ENCODE measurements at regions of chr1 and their contacts with region 1.

Region 1: DNA sequence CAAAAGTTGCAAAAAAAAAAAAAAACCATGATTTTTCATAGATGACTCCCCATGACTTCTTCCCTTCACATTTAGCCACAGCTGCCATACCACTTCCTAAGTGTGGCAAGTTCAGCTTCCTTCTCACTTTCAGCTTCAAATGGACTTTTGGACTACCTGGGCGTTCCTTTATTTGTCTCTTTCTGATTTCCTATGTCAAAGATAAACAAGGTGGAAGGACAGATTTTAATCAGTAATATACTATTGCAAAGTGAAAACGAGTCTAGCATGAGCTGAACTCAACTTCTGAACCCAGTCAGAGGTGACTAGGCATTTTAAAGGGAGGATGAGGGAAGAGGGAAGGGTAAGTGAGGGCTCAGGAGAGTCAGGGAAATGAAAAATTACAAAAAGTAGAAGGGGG is 14.4 kb upstream of the SCCPDH start:
- DNase-seq: no peak
- H3K4me3 ChIP-seq: no peak overlapping the region
- H3K4me3 Mint-ChIP-seq: no peak overlapping the region
- H3K27ac Mint-ChIP-seq: peak overlapping the region; percentile 47
- H3K4me1 ChIP-seq: peaks cover 11% of the 10 kb centered on the region
- H3K4me1 Mint-ChIP-seq: peaks cover 9% of the 10 kb centered on the region
- H3K27me3 ChIP-seq: no peaks in the 10 kb centered on the region
- H3K27me3 Mint-ChIP-seq: no peaks in the 10 kb centered on the region
- CTCF ChIP-seq: no peak

Region 2: DNA sequence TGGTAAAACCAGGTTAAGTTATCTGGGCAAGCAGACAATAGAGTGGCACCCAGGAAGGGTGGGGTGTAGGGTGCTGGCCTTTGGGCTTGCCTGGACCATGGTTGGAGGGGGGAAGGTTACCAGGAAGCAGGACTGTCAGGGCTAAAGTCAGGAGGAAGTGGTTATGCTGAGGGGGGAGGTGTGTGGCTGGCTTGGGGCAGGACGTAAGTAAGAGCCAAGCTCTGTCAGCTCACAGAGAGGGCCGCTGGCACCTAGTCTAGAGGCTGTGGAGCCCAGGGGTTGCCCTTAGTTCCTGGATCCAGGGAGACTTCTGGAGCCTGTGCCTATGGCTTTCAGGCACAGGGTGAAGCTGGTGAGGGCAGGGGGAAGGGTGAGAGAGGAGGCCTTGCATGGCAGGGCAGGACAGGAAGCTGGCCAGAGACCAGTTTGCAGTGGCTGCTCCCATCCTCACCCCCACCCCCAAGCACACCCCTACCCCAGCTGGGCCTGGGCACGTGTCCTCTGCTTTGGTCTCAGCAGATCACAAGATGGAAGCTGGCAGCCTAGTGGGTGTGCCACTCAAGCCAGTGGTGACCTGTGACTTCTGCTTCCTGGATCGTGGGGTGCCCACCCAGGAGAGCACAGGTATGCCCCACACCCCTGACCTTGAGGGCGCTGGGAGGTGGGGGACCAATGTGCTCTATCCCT is 182.3 kb before region 1 on chr1:
- CTCF ChIA-PET with region 1: no interaction called
- POLR2A ChIA-PET with region 1: no interaction called
- intact Hi-C with region 1: no loop called
- DNase-seq: no peak
- H3K4me3 ChIP-seq: no peak overlapping the region
- H3K4me3 Mint-ChIP-seq: no peak overlapping the region
- H3K27ac Mint-ChIP-seq: no peak overlapping the region
- H3K4me1 ChIP-seq: no peaks in the 10 kb centered on the region
- H3K4me1 Mint-ChIP-seq: no peaks in the 10 kb centered on the region
- H3K27me3 ChIP-seq: no peaks in the 10 kb centered on the region; the same call in 1 of the 2 replicates
- H3K27me3 Mint-ChIP-seq: peaks cover 3% of the 10 kb centered on the region
- CTCF ChIP-seq: no peak

Region 3: GRCh38 chr1:246959944-246960693 is 250.3 kb after region 1 on chr1:
- CTCF ChIA-PET with region 1: no interaction called
- POLR2A ChIA-PET with region 1: interaction called, 10 read pairs
- intact Hi-C with region 1: no loop called
- DNase-seq: no peak
- H3K4me3 ChIP-seq: no peak overlapping the region
- H3K4me3 Mint-ChIP-seq: no peak overlapping the region
- H3K27ac Mint-ChIP-seq: no peak overlapping the region
- H3K4me1 ChIP-seq: no peaks in the 10 kb centered on the region
- H3K4me1 Mint-ChIP-seq: no peaks in the 10 kb centered on the region
- H3K27me3 ChIP-seq: no peaks in the 10 kb centered on the region
- H3K27me3 Mint-ChIP-seq: no peaks in the 10 kb centered on the region
- CTCF ChIP-seq: no peak

Region 4: GRCh38 chr1:247156787-247157232 is 447.0 kb after region 1 on chr1:
- CTCF ChIA-PET with region 1: no interaction called
- POLR2A ChIA-PET with region 1: no interaction called
- intact Hi-C with region 1: no loop called
- DNase-seq: no peak
- H3K4me3 ChIP-seq: no peak overlapping the region
- H3K4me3 Mint-ChIP-seq: no peak overlapping the region
- H3K27ac Mint-ChIP-seq: no peak overlapping the region
- H3K4me1 ChIP-seq: no peaks in the 10 kb centered on the region
- H3K4me1 Mint-ChIP-seq: no peaks in the 10 kb centered on the region
- H3K27me3 ChIP-seq: no peaks in the 10 kb centered on the region
- H3K27me3 Mint-ChIP-seq: no peaks in the 10 kb centered on the region
- CTCF ChIP-seq: no peak

Measured in Caco-2 (cell line).